Natural killer cell (primary cell): ENCODE measurements at regions of chr10 and their contacts with region 1.

Region 1: GRCh38 chr10:22340362-22341189 is 4.7 kb upstream of the SPAG6 start:
- DNase-seq: peak; percentile 63 to 74
- ATAC-seq: peak; percentile 56 to 73 (median 69)
- H3K4me3 ChIP-seq: peak overlapping the region; percentile 85
- H3K4me3 Mint-ChIP-seq: peak overlapping the region; percentile 89
- H3K27ac ChIP-seq: peak overlapping the region; percentile 83
- H3K27ac Mint-ChIP-seq: peak overlapping the region; percentile 86 to 91
- H3K4me1 ChIP-seq: peaks cover 38% of the 10 kb centered on the region
- H3K4me1 Mint-ChIP-seq: peaks cover 16 to 30% of the 10 kb centered on the region in 2 donors
- H3K27me3 ChIP-seq: peaks cover 90% of the 10 kb centered on the region
- H3K27me3 Mint-ChIP-seq: peaks cover 62 to 68% of the 10 kb centered on the region in 2 donors
- CTCF ChIP-seq: no peak

Region 2: DNA sequence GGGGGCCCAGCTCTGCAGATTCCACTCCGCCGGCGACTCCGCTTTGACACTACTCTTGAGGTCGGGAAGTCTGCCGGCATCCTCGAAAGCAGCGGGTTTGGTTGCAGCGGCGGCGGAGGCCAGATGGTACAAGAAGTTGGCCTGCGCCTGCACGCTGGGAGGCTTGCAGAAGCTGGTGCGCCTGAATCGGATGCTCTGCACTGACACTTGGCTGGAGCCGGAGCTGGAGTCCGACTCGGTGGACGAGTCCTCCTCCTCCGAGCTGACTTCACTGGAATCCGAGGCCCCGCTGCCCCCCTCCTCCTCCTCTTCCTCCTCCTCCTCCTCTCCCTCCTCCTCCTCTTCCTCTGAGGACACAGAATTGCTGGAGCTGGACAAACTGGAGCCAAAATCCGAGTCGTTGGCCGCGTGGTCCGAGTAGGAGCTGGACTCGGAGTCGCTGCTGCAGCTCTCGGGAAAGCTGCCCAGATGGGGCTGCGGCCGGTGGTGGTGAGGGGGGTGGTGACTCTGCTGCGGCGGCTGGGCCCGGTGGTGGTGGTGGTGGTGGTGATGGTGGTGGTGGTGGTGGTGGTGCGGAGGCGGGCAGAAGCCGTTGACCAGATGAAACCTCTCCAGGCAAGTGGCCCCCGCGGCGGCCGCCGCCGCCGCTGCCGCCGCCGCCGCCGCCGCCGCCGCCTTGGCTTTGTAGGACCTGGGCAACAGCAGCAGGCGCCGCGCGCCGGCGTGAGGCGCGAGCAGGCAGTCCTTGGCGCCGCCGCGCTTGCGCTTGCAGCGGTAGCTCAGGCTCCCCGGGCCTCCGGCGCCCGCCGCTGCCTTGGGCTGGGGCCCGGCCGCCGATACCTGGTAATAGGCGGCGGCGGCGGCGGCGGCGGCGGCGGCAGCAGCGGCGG is 824.1 kb before region 1 on chr10:
- intact Hi-C with region 1: loop called (anchors 2 kb)
- DNase-seq: peak; percentile 36 to 79
- ATAC-seq: peak; percentile 72 to 83 (median 79)
- H3K4me3 ChIP-seq: peak overlapping the region; percentile 20
- H3K4me3 Mint-ChIP-seq: peak overlapping the region; percentile 86
- H3K27ac ChIP-seq: no peak overlapping the region
- H3K27ac Mint-ChIP-seq: no peak overlapping the region
- H3K4me1 ChIP-seq: peaks cover 34% of the 10 kb centered on the region
- H3K4me1 Mint-ChIP-seq: peaks cover 24 to 29% of the 10 kb centered on the region in 2 donors
- H3K27me3 ChIP-seq: peaks cover 82% of the 10 kb centered on the region
- H3K27me3 Mint-ChIP-seq: peaks cover 67 to 83% of the 10 kb centered on the region in 2 donors
- CTCF ChIP-seq: no peak

Region 3: GRCh38 chr10:22251751-22252223 is 88.8 kb before region 1 on chr10:
- intact Hi-C with region 1: loop called (anchors 5 kb)
- DNase-seq: peak; percentile 34 to 81
- ATAC-seq: peak; percentile 61 to 68 (median 67)
- H3K4me3 ChIP-seq: peak overlapping the region; percentile 83
- H3K4me3 Mint-ChIP-seq: peak overlapping the region; percentile 98
- H3K27ac ChIP-seq: peak overlapping the region; percentile 96
- H3K27ac Mint-ChIP-seq: peak overlapping the region; percentile 74 to 85
- H3K4me1 ChIP-seq: peaks cover 19% of the 10 kb centered on the region
- H3K4me1 Mint-ChIP-seq: peaks cover 17 to 23% of the 10 kb centered on the region in 2 donors
- H3K27me3 ChIP-seq: peaks cover 19% of the 10 kb centered on the region
- H3K27me3 Mint-ChIP-seq: peaks cover 34 to 49% of the 10 kb centered on the region in 2 donors
- CTCF ChIP-seq: no peak

Region 4: GRCh38 chr10:22420787-22421517 is 80.4 kb after region 1 on chr10:
- intact Hi-C with region 1: no loop called
- DNase-seq: peak in 1 of 2 donors; percentile 57
- ATAC-seq: peak in 1 of 3 donors; percentile 26
- H3K4me3 ChIP-seq: no peak overlapping the region
- H3K4me3 Mint-ChIP-seq: no peak overlapping the region
- H3K27ac ChIP-seq: no peak overlapping the region
- H3K27ac Mint-ChIP-seq: no peak overlapping the region
- H3K4me1 ChIP-seq: no peaks in the 10 kb centered on the region
- H3K4me1 Mint-ChIP-seq: peaks cover 0 to 8% of the 10 kb centered on the region in 2 donors
- H3K27me3 ChIP-seq: no peaks in the 10 kb centered on the region
- H3K27me3 Mint-ChIP-seq: no peaks in the 10 kb centered on the region
- CTCF ChIP-seq: peak; percentile 36

Region 5: GRCh38 chr10:22475651-22476600 is 135.3 kb after region 1 on chr10:
- intact Hi-C with region 1: loop called (anchors 10 kb)
- DNase-seq: peak; percentile 26 to 38
- ATAC-seq: peak in 2 of 3 donors; percentile 30 to 50
- H3K4me3 ChIP-seq: peak overlapping the region; percentile 23
- H3K4me3 Mint-ChIP-seq: peak overlapping the region; percentile 92
- H3K27ac ChIP-seq: no peak overlapping the region
- H3K27ac Mint-ChIP-seq: peak overlapping the region; percentile 38 to 58
- H3K4me1 ChIP-seq: peaks cover 34% of the 10 kb centered on the region
- H3K4me1 Mint-ChIP-seq: peaks cover 26 to 43% of the 10 kb centered on the region in 2 donors
- H3K27me3 ChIP-seq: peaks cover 58% of the 10 kb centered on the region
- H3K27me3 Mint-ChIP-seq: peaks cover 70 to 75% of the 10 kb centered on the region in 2 donors
- CTCF ChIP-seq: no peak

Region 6: DNA sequence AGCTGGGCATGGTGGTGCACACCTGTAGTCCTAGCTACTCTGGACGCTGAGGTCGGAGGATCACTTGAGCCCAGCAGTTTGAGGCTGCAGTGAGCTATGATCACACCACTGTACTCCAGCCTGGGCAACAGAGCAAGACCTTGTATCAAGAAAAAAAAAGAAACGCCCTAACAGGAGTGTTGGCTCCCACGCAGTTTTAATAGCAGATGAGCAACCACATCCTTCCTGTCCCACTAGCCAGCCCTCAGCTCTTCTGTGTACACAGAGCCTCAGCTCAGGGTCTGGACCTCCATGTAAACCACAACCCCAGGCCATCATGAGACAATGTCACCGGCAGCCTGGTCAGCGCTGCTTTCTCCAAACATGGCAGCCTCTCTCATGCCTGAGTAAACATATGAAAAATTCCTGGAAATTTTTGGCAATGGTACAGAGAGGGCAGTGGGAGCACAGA is 265.6 kb after region 1 on chr10:
- intact Hi-C with region 1: no loop called
- DNase-seq: peak; percentile 58 to 80
- ATAC-seq: peak; percentile 71 to 89 (median 86)
- H3K4me3 ChIP-seq: peak overlapping the region; percentile 1
- H3K4me3 Mint-ChIP-seq: peak overlapping the region; percentile 74
- H3K27ac ChIP-seq: peak overlapping the region; percentile 79
- H3K27ac Mint-ChIP-seq: peak overlapping the region; percentile 99
- H3K4me1 ChIP-seq: peaks cover 75% of the 10 kb centered on the region
- H3K4me1 Mint-ChIP-seq: peaks cover 87 to 97% of the 10 kb centered on the region in 2 donors
- H3K27me3 ChIP-seq: no peaks in the 10 kb centered on the region
- H3K27me3 Mint-ChIP-seq: no peaks in the 10 kb centered on the region
- CTCF ChIP-seq: no peak

Region 7: GRCh38 chr10:22988581-22989360 is 648.2 kb after region 1 on chr10:
- intact Hi-C with region 1: loop called (anchors 5 kb)
- DNase-seq: peak; percentile 48 to 89
- ATAC-seq: peak; percentile 87 to 95 (median 90)
- H3K4me3 ChIP-seq: no peak overlapping the region
- H3K4me3 Mint-ChIP-seq: no peak overlapping the region
- H3K27ac ChIP-seq: no peak overlapping the region
- H3K27ac Mint-ChIP-seq: no peak overlapping the region
- H3K4me1 ChIP-seq: no peaks in the 10 kb centered on the region
- H3K4me1 Mint-ChIP-seq: peaks cover 4 to 6% of the 10 kb centered on the region in 2 donors
- H3K27me3 ChIP-seq: no peaks in the 10 kb centered on the region
- H3K27me3 Mint-ChIP-seq: peaks cover 11 to 16% of the 10 kb centered on the region in 2 donors
- CTCF ChIP-seq: peak; percentile 90